Activated T-helper 1 cell treated with anti-CD3 and anti-CD28 coated beads, Interleukin-12 subunit alpha, Interleukin-12 subunit beta, Interleukin-2, Interleukin-4 antibody, amounts not matched to agents 30 ng/mL and 10 ng/mL and 1 ng/mL, durations not matched to agents 14 hours and 24 hours and 36 hours (primary cell): ENCODE measurements at regions of chr9 and their contacts with region 1.

Region 1: DNA sequence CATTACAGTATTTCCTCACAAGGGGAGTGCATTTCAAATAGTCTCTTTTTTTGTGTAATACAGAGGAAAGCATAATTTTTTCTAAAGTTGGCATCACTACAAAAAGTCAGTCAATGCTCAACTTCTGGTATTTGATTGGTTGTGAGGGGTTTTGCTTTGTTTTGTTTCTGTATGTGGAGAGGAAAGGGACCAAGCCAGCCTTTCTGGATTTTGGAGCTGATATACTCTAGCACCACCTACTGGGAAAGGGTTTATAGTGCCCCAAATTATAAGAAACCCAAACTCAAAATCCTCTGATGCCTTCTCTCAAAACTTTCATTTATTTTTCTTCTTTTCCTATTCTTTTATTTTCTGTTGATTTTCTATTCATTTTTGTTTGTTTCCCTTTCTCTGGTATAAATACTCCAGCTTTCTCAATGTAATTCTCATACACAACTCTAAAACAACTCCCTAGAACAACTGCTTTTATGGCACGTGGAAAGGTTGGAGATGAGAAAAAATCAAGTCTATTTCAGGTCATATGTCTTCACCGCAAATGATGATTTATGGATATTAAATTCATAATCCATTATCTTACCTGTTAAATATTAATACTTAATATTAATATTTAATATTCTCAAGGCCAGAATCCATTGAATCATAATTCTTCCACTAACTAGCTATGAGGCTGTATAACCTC is 69.5 kb upstream of the ANXA1 start:
- DNase-seq: no peak
- H3K4me3 Mint-ChIP-seq: no peak overlapping the region
- H3K27ac Mint-ChIP-seq: no peak overlapping the region
- H3K4me1 Mint-ChIP-seq: no peaks in the 10 kb centered on the region
- H3K27me3 Mint-ChIP-seq: peaks cover 22% of the 10 kb centered on the region

Region 2: GRCh38 chr9:72203205-72203803 is 878.8 kb before region 1 on chr9:
- intact Hi-C with region 1: loop called (anchors 2 kb)
- DNase-seq: no peak
- H3K4me3 Mint-ChIP-seq: no peak overlapping the region
- H3K27ac Mint-ChIP-seq: no peak overlapping the region
- H3K4me1 Mint-ChIP-seq: no peaks in the 10 kb centered on the region
- H3K27me3 Mint-ChIP-seq: peaks cover 3% of the 10 kb centered on the region

Region 3: DNA sequence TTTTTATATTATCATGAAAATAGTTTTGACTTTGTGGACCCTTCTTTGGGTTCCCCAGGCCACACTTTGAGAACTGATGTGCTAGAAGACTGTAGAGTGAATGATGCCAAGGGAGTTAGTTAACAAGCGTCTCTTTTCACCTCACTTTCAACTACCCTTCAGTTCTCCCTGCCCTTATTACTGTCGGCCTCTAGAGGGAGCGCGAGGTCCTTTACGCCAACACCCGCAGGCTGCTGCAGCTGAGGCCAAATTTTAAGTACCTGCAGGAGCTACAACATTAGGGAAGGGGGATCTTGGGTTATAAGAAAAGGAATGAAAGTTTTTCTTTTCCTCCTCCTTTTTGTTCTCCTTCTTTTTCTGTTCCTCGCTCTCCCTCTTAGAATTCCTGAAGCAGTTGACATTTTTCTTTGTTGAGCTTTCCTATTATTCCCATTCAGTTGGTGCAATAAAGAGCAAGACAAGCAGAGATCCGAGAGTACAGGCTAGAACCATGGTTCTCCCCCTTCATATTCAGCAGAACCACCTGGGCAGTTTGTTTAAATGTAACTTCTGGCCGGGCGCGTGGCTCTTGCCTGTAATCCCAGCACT is 801.1 kb before region 1 on chr9:
- intact Hi-C with region 1: loop called (anchors 1 kb)
- DNase-seq: peak; percentile 52
- H3K4me3 Mint-ChIP-seq: no peak overlapping the region
- H3K27ac Mint-ChIP-seq: peak overlapping the region; percentile 36
- H3K4me1 Mint-ChIP-seq: no peaks in the 10 kb centered on the region
- H3K27me3 Mint-ChIP-seq: peaks cover 6% of the 10 kb centered on the region

Region 4: GRCh38 chr9:72856972-72857623 is 225.0 kb before region 1 on chr9:
- intact Hi-C with region 1: loop called (anchors 5 kb)
- DNase-seq: no peak
- H3K4me3 Mint-ChIP-seq: no peak overlapping the region
- H3K27ac Mint-ChIP-seq: no peak overlapping the region
- H3K4me1 Mint-ChIP-seq: no peaks in the 10 kb centered on the region
- H3K27me3 Mint-ChIP-seq: peaks cover 4% of the 10 kb centered on the region

Region 5: GRCh38 chr9:72984991-72985390 is 97.1 kb before region 1 on chr9:
- intact Hi-C with region 1: no loop called
- DNase-seq: no peak
- H3K4me3 Mint-ChIP-seq: no peak overlapping the region
- H3K27ac Mint-ChIP-seq: no peak overlapping the region
- H3K4me1 Mint-ChIP-seq: no peaks in the 10 kb centered on the region
- H3K27me3 Mint-ChIP-seq: peaks cover 2% of the 10 kb centered on the region

Region 6: DNA sequence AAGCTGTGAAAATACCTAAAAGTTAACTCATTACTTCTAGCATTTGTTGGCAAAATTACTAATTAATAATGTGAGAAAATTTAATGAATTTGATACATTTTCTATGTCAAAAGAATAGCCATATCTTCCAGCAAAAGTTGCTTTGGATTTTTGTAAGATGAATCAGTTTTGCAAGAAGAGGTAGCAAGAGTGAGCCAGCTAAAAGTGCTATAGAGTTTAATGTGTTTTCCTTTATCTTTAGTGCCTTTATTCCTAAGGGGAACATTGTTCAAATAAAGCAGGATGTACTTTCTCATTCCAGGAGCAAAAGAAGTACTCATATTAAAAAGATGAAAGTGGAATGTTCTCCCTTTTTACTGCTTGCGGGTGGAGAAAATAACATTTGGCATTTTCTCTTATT is 691.8 kb after region 1 on chr9:
- intact Hi-C with region 1: no loop called
- DNase-seq: no peak
- H3K4me3 Mint-ChIP-seq: no peak overlapping the region
- H3K27ac Mint-ChIP-seq: no peak overlapping the region
- H3K4me1 Mint-ChIP-seq: no peaks in the 10 kb centered on the region
- H3K27me3 Mint-ChIP-seq: no peaks in the 10 kb centered on the region